GM10248 (cell line): ENCODE measurements at regions of chr6 and their contacts with region 1.

Region 1: DNA sequence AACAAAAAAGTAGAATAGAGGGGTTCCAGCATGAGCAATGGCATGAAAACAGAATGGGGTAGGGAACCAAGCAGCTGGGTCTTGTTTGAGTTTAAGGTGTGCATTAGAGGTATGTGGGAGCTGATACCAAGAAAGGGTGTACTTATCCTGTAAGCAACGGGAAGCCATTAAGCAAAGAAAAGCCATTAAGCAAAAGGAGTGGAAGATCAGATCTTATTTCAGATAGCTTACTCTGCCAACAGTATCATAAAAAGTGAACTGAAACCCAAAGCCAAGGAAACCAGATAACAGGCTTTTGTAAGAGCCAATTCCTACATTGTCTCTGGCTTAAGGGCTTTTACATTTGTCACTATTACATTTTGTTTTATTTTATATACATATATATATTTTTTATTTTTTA is 21.3 kb upstream of the BEND6 start:
- DNase-seq: peak; percentile 20
- CTCF ChIP-seq: no peak

Region 2: GRCh38 chr6:56955171-56956045 is 21.8 kb after region 1 on chr6:
- CTCF ChIA-PET with region 1: interaction called, 15 read pairs
- POLR2A ChIA-PET with region 1: interaction called, 3 read pairs
- DNase-seq: peak; percentile 85
- CTCF ChIP-seq: peak; percentile 82